ENCODE measurements at regions of chr2 and their contacts with region 1.

Region 1: DNA sequence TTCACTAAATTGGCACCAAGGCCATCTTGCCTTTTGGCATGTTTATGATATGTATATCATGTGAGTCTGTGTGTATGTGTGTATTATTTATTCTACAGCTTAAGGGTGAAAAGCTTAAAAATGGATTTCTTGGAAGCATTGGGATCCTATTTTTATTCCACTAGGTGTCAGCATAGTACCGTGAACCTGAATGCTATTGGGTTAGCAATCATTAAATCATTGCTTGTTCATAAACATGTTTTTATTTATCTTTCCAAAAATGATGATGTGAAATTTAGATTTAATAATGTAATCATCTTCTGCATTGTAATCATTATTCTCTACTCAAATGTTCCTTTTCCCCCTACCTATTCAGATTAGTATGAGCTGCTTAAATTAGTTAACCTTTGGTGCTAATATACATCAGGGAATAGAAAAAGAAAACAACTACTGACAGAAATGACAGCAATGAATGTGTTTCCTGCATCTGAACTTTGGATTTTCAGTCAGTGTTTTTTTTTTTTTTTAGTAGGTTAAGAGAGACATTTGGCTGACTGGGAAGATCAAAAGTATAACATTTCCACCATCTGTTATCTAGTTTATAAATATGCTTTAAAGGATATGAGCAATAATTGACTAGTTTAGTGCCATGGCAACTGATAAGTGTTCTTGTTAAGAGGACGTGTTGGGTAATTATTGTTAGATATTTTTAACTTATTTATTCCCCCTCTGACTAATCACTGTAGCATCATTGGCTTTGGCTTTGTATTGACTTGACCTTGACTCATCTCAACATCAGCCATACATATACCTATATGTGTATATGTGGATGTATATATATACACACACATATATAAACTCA is 14.1 kb upstream of the ZSWIM2 start:
- DNase-seq: peak; percentile 34 to 59 (median 36)
- ATAC-seq: peak; percentile 91
- H3K4me3 ChIP-seq: no peak overlapping the region
- H3K27ac ChIP-seq: no peak overlapping the region
- H3K4me1 ChIP-seq: no peaks in the 10 kb centered on the region
- H3K27me3 ChIP-seq: no peaks in the 10 kb centered on the region
- CTCF ChIP-seq: peak; percentile 47 to 87 (median 50); a peak in 4 of 6 replicates
- EP300 ChIP-seq: no peak
- POLR2A ChIP-seq: no peak
- RAD21 ChIP-seq: peak; percentile 90 to 94

Region 2: DNA sequence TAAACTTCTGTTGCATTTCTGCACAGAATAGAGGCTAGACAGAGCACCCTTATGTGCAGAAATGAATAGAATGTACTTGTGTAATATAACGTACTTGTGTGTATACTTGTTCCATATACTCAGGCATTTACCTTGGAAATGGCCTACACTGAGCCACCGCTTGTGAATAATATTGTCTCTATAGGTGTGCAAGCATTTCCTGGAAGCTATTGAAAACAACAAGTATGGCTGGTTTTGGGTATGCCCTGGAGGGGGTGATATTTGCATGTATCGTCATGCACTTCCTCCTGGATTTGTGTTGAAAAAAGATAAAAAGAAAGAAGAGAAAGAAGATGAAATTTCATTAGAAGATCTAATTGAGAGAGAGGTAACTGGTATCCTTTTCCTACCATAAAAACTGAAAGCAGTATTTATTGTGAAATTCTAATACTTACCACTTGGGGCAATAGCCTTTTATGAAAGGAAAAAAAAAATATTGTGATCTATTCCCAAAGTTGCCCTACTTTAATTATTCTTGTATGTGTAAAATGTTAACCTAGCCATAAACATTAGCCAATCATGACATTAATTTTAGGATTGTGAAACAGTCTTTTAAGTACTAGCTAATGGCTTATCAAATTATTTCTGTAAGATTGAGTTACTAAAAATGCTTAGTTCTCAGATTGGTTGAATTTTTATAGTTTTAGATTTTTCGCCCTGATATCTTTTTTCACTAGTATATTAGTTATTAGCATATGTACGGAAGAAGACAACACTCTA is 359.1 kb before region 1 on chr2:
- CTCF ChIA-PET with region 1: no interaction called
- POLR2A ChIA-PET with region 1: no interaction called
- in situ Hi-C with region 1: no loop called
- intact Hi-C with region 1: loop called (anchors 10 kb)
- DNase-seq: peak in 1 of 4 experiments; percentile 23
- ATAC-seq: peak; percentile 66
- H3K4me3 ChIP-seq: no peak overlapping the region
- H3K27ac ChIP-seq: no peak overlapping the region
- H3K4me1 ChIP-seq: no peaks in the 10 kb centered on the region
- H3K27me3 ChIP-seq: no peaks in the 10 kb centered on the region
- CTCF ChIP-seq: peak; percentile 28 to 63 (median 30); a peak in 4 of 6 replicates
- EP300 ChIP-seq: no peak
- POLR2A ChIP-seq: no peak
- RAD21 ChIP-seq: peak; percentile 64 to 81

Region 3: GRCh38 chr2:187174582-187174981 is 311.5 kb after region 1 on chr2:
- CTCF ChIA-PET with region 1: interaction called, 3 read pairs
- POLR2A ChIA-PET with region 1: no interaction called
- in situ Hi-C with region 1: no loop called
- intact Hi-C with region 1: loop called (anchors 5 kb)
- DNase-seq: peak; percentile 41 to 64 (median 56)
- ATAC-seq: peak; percentile 94
- H3K4me3 ChIP-seq: no peak overlapping the region
- H3K27ac ChIP-seq: no peak overlapping the region
- H3K4me1 ChIP-seq: no peaks in the 10 kb centered on the region
- H3K27me3 ChIP-seq: no peaks in the 10 kb centered on the region
- CTCF ChIP-seq: peak; percentile 55 to 72 (median 69); a peak in 5 of 6 replicates
- EP300 ChIP-seq: no peak
- POLR2A ChIP-seq: no peak
- RAD21 ChIP-seq: peak; percentile 32 to 54; a peak in 3 of 4 replicates

Region 4: DNA sequence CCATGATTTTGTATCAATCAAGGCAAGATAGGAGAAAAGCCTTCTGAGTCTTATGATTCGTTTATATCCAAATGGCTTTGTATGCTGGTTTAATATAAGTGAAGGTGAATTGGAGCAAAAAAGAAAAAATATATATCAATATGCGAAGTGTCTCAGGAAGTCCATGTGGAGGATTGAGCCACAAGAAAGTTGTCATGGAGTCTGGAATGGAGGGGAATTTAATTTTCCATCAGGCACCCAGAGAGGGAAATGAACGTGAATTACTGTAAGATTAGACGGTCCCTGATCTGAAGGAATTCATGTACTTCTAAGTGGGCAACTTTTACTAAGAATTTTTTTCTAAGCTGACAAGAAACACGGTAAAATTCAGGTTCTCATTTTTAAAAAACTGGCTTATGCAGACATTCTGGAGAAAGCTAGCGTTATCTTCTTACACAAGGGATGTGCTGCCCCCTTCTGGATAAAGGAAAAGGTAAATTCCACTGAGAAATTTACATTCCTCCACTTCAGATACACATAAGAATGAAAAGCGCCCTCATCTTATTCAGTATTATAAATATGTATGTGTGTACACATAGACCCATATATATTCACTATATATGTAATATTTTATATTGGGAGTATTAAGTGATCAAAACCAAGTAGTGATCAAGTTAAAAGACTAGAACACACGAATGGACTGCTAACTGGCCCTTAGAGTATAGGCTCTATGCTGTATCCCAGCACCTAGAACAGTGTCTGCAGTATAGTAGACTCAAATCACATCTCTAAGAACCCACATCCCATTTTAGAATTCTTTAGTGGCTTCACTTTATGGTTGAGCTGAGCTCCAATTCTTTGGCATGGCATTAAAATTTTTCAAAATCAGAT is 980.1 kb after region 1 on chr2:
- CTCF ChIA-PET with region 1: no interaction called
- POLR2A ChIA-PET with region 1: no interaction called
- in situ Hi-C with region 1: no loop called
- intact Hi-C with region 1: no loop called
- DNase-seq: peak; percentile 9 to 57 (median 19)
- ATAC-seq: peak; percentile 75
- H3K4me3 ChIP-seq: no peak overlapping the region
- H3K27ac ChIP-seq: no peak overlapping the region
- H3K4me1 ChIP-seq: no peaks in the 10 kb centered on the region
- H3K27me3 ChIP-seq: no peaks in the 10 kb centered on the region
- CTCF ChIP-seq: peak; percentile 34 to 61 (median 46); a peak in 5 of 6 replicates
- EP300 ChIP-seq: no peak
- POLR2A ChIP-seq: no peak
- RAD21 ChIP-seq: peak; percentile 46 to 71